Endothelial cell of umbilical vein (primary cell): ENCODE measurements at regions of chr2 and their contacts with region 1.

Region 1: GRCh38 chr2:133171393-133172004 is 396.8 kb downstream of the NCKAP5 start:
- DNase-seq: peak; percentile 79
- H3K4me3 ChIP-seq: no peak overlapping the region
- H3K27ac ChIP-seq: no peak overlapping the region
- H3K4me1 ChIP-seq: no peaks in the 10 kb centered on the region
- H3K27me3 ChIP-seq: peaks cover 2% of the 10 kb centered on the region in 2 experiments
- CTCF ChIP-seq: peak; percentile 48 to 58
- POLR2A ChIP-seq: no peak

Region 2: DNA sequence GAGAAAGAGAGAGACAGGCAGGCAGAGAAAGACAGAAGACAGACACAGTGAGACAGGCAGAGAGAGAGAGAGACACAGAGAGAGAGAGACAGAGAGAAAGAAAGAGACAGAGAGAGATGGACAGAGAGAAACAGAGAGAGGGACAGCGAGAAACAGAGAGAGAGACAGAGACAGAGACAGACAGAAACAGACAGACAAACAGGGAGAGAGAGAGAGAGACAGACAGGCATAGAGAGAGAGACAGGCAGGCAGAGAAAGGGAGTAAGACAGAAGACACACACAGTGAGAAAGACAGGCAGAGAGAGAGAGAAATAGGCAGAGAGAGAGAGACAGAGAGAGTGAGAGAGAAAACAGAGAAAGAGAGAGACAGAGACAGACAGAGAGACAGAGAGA is 904.4 kb before region 1 on chr2:
- CTCF ChIA-PET with region 1: interaction called, 7 read pairs
- POLR2A ChIA-PET with region 1: no interaction called
- dilution Hi-C with region 1: no loop called
- intact Hi-C with region 1: loop called (anchors 2 kb)
- DNase-seq: no peak
- H3K4me3 ChIP-seq: no peak overlapping the region
- H3K27ac ChIP-seq: no peak overlapping the region
- H3K4me1 ChIP-seq: peaks cover 4% of the 10 kb centered on the region
- H3K27me3 ChIP-seq: no peaks in the 10 kb centered on the region
- CTCF ChIP-seq: no peak
- POLR2A ChIP-seq: no peak

Region 3: GRCh38 chr2:132651115-132652045 is 520.1 kb before region 1 on chr2:
- CTCF ChIA-PET with region 1: interaction called, 51 read pairs
- POLR2A ChIA-PET with region 1: no interaction called
- dilution Hi-C with region 1: no loop called
- intact Hi-C with region 1: loop called (anchors 1 kb)
- DNase-seq: peak; percentile 73
- H3K4me3 ChIP-seq: no peak overlapping the region
- H3K27ac ChIP-seq: no peak overlapping the region
- H3K4me1 ChIP-seq: peaks cover 2% of the 10 kb centered on the region
- H3K27me3 ChIP-seq: no peaks in the 10 kb centered on the region
- CTCF ChIP-seq: peak; percentile 56 to 80
- POLR2A ChIP-seq: no peak

Region 4: DNA sequence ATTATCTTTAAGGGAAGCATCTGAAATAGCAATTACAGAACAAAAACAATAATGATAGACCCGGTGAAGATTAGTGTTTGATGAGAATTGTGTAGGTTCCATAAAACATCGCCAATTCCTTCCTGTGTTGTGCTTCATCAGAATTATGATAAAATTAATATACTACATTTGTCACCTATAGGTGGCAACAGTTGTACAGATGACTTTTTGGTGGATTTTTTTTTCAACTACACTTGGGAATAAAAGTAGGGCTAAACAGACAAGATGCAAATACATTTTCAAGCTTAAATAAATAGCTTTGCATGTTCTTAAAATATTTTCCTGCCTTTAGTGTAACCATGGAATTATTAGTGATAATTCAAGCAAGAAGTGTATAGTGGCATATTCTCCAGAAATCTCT is 494.5 kb before region 1 on chr2:
- CTCF ChIA-PET with region 1: interaction called, 13 read pairs
- POLR2A ChIA-PET with region 1: no interaction called
- dilution Hi-C with region 1: no loop called
- intact Hi-C with region 1: no loop called
- DNase-seq: peak; percentile 22
- H3K4me3 ChIP-seq: no peak overlapping the region
- H3K27ac ChIP-seq: no peak overlapping the region
- H3K4me1 ChIP-seq: peaks cover 10% of the 10 kb centered on the region
- H3K27me3 ChIP-seq: no peaks in the 10 kb centered on the region
- CTCF ChIP-seq: no peak
- POLR2A ChIP-seq: no peak

Region 5: GRCh38 chr2:132766573-132766972 is 404.9 kb before region 1 on chr2:
- CTCF ChIA-PET with region 1: no interaction called
- POLR2A ChIA-PET with region 1: no interaction called
- dilution Hi-C with region 1: no loop called
- intact Hi-C with region 1: no loop called
- DNase-seq: no peak
- H3K4me3 ChIP-seq: no peak overlapping the region
- H3K27ac ChIP-seq: no peak overlapping the region
- H3K4me1 ChIP-seq: no peaks in the 10 kb centered on the region
- H3K27me3 ChIP-seq: no peaks in the 10 kb centered on the region
- CTCF ChIP-seq: no peak
- POLR2A ChIP-seq: no peak

Region 6: DNA sequence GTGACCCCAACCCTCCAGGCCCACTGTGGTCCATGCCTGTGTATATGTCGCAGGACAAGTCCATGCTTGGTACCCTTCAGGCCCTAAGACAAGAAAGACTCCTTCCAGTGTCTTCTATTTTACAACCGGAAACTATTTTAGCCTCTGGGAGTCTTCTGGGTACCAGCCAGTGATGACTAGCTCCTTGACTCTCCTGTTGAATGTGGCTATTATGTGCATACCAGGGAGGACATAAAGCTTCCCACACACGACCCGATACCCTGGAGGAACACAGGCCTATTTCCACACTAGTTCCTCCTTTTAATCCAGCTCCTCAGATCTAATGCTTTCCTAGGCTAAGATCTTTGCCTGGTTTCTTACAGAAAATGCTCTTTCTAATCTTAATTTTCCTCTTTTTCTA is 218.7 kb after region 1 on chr2:
- CTCF ChIA-PET with region 1: no interaction called
- POLR2A ChIA-PET with region 1: no interaction called
- dilution Hi-C with region 1: no loop called
- intact Hi-C with region 1: loop called (anchors 10 kb)
- DNase-seq: no peak
- H3K4me3 ChIP-seq: no peak overlapping the region
- H3K27ac ChIP-seq: no peak overlapping the region
- H3K4me1 ChIP-seq: no peaks in the 10 kb centered on the region
- H3K27me3 ChIP-seq: no peaks in the 10 kb centered on the region
- CTCF ChIP-seq: no peak
- POLR2A ChIP-seq: no peak